ENCODE measurements at regions of chr17 and their contacts with region 1.

Region 1: DNA sequence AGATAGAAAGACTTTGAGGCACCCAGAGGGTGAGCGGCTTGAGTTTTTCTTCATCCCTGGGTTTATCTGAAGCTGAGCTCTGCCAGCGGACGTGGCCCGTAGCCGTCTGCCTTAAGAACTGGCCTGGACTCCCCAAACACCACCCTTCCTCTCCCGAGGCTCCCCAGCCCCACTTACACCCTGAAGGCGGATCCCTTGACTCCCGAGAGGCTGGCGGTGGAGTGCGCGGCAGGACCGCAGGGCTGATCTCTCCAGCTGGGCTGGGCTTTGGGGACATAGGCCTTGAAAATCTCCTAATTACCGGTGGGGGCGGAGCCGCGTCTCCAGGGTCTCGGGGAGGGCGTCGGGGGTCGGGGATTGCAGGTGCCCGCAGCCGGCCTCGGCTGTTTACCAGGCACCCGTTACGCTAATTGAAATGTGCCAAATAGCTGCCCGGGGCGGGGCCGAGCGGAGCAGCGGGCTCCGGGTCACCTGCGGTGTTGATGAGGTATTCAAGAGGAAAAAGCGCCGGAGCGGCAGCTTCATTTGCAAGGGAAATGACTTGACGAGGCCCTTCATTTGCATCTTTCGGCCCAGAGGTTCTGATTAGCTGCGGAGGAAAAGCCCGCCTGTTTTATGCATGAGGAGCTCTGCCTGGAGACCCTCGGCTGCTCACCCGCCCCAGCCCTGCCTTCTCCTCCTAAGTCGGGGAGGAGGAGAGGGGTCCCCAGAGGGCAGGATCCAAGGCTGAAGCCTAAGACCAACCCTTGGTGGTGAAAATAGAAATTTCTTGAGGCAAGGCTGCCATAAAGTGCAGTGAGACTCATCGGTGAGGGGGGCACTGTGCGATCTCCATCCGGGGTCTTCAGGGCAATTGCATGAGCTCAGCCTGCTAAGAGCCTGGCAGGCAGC is 100.7 kb downstream of the MGAT5B start:
- DNase-seq: peak; percentile 60 to 69
- H3K4me3 ChIP-seq: peak overlapping the region; percentile 59
- H3K27ac ChIP-seq: 0 out of 2 replicates have a peak overlapping the region, but pooled peaks have one; percentile 21
- H3K4me1 ChIP-seq: peaks cover 16% of the 10 kb centered on the region
- H3K27me3 ChIP-seq: no peaks in the 10 kb centered on the region
- CTCF ChIP-seq: no peak

Region 2: DNA sequence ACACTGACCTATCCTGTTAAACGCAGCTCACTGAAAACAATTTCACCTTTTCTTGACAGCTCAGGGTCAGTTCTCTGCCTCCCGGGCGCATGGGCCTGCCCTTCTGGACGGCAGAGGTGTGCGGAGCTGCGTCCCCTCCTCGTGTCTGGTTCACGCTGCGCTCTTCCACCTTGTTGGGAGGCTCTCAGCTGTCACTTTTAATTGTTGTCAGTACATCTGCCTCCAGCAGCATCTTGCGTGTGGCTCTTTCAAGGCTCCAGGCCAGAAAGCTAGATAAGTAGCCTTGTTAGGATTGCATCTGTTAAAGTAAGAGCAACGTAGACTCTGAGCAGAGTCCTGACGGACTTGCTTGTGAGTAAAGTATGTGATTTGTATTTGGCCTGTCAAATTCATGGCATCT is 41.4 kb before region 1 on chr17:
- CTCF ChIA-PET with region 1: no interaction called
- POLR2A ChIA-PET with region 1: interaction called, 19 read pairs
- intact Hi-C with region 1: no loop called
- DNase-seq: no peak
- H3K4me3 ChIP-seq: no peak overlapping the region
- H3K27ac ChIP-seq: no peak overlapping the region
- H3K4me1 ChIP-seq: no peaks in the 10 kb centered on the region
- H3K27me3 ChIP-seq: no peaks in the 10 kb centered on the region
- CTCF ChIP-seq: no peak